ENCODE measurements at regions of chr12 and their contacts with region 1.

Region 1: DNA sequence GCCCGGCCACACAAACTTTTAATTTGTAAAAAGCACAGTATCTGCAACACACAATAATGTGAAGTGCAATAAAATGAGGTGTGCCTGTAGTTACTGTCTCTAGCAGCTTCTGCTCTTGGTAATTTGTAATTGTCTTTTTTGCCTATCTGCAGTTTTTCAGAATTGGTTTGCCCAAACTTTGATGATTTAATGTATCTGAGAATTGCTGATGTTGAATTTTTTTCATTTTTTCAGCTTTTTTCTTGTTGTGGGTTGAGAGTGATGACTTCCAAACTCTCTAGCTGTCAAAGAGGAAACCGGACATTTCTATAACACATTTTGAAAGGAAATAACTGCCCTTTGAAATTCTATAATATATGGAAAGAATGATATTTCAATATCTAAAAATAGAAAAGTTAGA is 236.9 kb downstream of the RERGL start:
- DNase-seq: no peak
- H3K4me3 ChIP-seq: no peak overlapping the region
- H3K27ac ChIP-seq: no peak overlapping the region
- H3K4me1 ChIP-seq: no peaks in the 10 kb centered on the region
- H3K27me3 ChIP-seq: no peaks in the 10 kb centered on the region
- CTCF ChIP-seq: no peak

Region 2: GRCh38 chr12:17763366-17763765 is 89.7 kb before region 1 on chr12:
- intact Hi-C with region 1: loop called (anchors 5 kb)
- DNase-seq: no peak
- H3K4me3 ChIP-seq: no peak overlapping the region
- H3K27ac ChIP-seq: no peak overlapping the region
- H3K4me1 ChIP-seq: no peaks in the 10 kb centered on the region
- H3K27me3 ChIP-seq: no peaks in the 10 kb centered on the region
- CTCF ChIP-seq: no peak

Measured in kidney (tissue), 22 donors.